AG04449 (cell line): ENCODE measurements at regions of chr1 and their contacts with region 1.

Region 1: GRCh38 chr1:214632091-214632490 is 29.1 kb downstream of the CENPF start:
- DNase-seq: no peak
- H3K4me3 ChIP-seq: no peak overlapping the region
- CTCF ChIP-seq: no peak

Region 2: GRCh38 chr1:214213136-214213535 is 419.0 kb before region 1 on chr1:
- CTCF ChIA-PET with region 1: interaction called, 42 read pairs
- POLR2A ChIA-PET with region 1: no interaction called
- DNase-seq: no peak
- H3K4me3 ChIP-seq: no peak overlapping the region
- CTCF ChIP-seq: no peak

Region 3: GRCh38 chr1:214590696-214591095 is 41.4 kb before region 1 on chr1:
- CTCF ChIA-PET with region 1: interaction called, 10 read pairs
- POLR2A ChIA-PET with region 1: no interaction called
- DNase-seq: no peak
- H3K4me3 ChIP-seq: no peak overlapping the region
- CTCF ChIP-seq: no peak

Region 4: GRCh38 chr1:214615871-214616270 is 16.2 kb before region 1 on chr1:
- CTCF ChIA-PET with region 1: interaction called, 31 read pairs
- POLR2A ChIA-PET with region 1: no interaction called
- DNase-seq: no peak
- H3K4me3 ChIP-seq: no peak overlapping the region
- CTCF ChIP-seq: no peak

Region 5: DNA sequence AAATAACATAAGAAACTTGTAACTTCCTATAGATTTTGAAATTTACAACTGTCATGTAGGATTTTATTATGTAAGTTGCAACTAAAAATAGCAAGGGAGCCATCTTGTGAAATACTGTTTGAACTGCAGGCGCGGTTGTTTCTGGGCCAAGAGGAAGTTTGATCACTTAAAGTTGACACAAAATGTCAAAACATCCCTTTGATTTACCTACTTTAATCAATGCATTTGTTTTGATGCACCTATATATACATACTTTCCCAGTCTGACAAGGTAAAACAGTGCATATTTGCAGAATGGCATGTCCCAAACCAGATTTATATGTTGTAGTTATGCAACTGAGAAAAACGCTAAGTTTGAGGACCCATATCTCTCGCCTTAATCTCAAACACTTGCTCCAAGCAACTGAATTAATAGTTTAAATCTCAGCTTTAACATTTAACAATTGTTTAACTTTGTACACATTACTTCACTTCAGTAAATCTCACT is 514.3 kb after region 1 on chr1:
- CTCF ChIA-PET with region 1: interaction called, 17 read pairs
- POLR2A ChIA-PET with region 1: no interaction called
- DNase-seq: no peak
- H3K4me3 ChIP-seq: no peak overlapping the region
- CTCF ChIP-seq: peak; percentile 44

Region 6: DNA sequence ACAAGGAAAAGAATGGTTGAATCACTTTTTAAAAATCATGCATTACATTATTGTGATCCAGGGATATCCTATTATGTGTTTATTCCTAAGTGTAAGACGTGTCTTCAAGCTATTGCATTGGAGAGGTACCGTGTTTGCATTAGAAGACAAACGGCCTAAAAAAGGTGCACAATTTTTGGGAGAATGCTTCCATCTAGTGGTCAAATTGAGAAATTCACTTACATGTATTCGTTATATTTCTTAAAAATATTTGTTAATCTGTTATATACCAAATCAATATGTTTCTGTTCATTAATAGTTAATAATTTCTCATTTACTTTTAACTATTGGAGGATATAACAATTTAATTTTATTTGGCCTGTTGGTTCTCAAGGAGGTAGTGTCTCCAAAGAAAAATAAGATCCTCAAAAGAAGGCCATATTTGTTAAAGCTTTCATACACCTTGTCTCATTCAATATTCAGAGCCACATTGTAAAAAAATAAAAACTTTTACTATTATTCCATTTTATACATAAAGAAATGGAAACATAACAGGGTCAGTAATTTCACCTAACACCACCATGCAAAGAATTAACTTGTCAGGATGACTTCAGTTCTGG is 894.6 kb after region 1 on chr1:
- CTCF ChIA-PET with region 1: interaction called, 147 read pairs
- POLR2A ChIA-PET with region 1: no interaction called
- DNase-seq: no peak
- H3K4me3 ChIP-seq: no peak overlapping the region
- CTCF ChIP-seq: peak; percentile 27